ENCODE measurements at regions of chr6 and their contacts with region 1.

Region 1: GRCh38 chr6:111997078-111997852 is 56.6 kb upstream of the CCN6 start:
- DNase-seq: peak; percentile 74
- H3K4me3 ChIP-seq: no peak overlapping the region
- H3K27ac ChIP-seq: no peak overlapping the region
- H3K4me1 ChIP-seq: peaks cover 14% of the 10 kb centered on the region
- H3K27me3 ChIP-seq: no peaks in the 10 kb centered on the region
- CTCF ChIP-seq: peak; percentile 88
- POLR2A ChIP-seq: no peak

Region 2: DNA sequence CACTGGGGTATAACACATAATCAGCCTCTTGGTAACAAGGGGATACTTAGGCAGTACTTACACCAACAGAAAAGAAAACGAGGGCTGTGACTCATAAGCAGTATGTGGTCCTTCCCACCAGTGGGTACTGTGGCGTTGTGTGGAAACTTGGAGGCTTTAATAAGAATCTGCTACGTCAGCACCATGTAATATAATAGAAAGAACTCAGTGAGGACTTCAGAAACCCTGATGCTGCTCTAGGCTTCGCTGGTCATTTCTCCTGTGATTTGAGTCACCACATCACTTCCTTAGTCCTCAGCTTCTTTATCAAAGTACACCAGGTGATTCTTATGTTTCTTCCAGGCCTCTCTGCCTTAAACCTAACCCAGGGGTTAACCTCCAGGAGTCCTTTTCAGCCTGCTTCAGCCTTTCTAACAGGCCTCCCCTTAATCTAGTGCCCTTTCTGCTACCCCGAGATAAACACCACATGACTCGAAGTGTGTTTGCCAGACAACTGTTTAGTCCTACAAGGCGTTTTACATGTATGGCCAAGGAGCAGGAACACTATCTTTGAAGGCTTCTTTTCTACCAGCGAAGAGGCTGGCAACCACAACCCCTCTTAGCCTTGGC is 192.5 kb before region 1 on chr6:
- CTCF ChIA-PET with region 1: interaction called, 6 read pairs
- POLR2A ChIA-PET with region 1: no interaction called
- dilution Hi-C with region 1: no loop called
- intact Hi-C with region 1: loop called (anchors 1 kb)
- DNase-seq: peak; percentile 81
- H3K4me3 ChIP-seq: no peak overlapping the region
- H3K27ac ChIP-seq: peak overlapping the region; percentile 56
- H3K4me1 ChIP-seq: peaks cover 39% of the 10 kb centered on the region
- H3K27me3 ChIP-seq: no peaks in the 10 kb centered on the region
- CTCF ChIP-seq: no peak
- POLR2A ChIP-seq: no peak

Region 3: GRCh38 chr6:112117554-112117953 is 120.3 kb after region 1 on chr6:
- CTCF ChIA-PET with region 1: no interaction called
- POLR2A ChIA-PET with region 1: no interaction called
- dilution Hi-C with region 1: no loop called
- intact Hi-C with region 1: no loop called
- DNase-seq: peak; percentile 38
- H3K4me3 ChIP-seq: no peak overlapping the region
- H3K27ac ChIP-seq: peak overlapping the region; percentile 40
- H3K4me1 ChIP-seq: peaks cover 12% of the 10 kb centered on the region
- H3K27me3 ChIP-seq: no peaks in the 10 kb centered on the region
- CTCF ChIP-seq: no peak
- POLR2A ChIP-seq: no peak

Measured in endothelial cell of umbilical vein (primary cell).